Posterior cingulate gyrus (tissue), 11 donors: ENCODE measurements at regions of chr20 and their contacts with region 1.

Region 1: GRCh38 chr20:20052074-20052970 is at the starts of genes CFAP61 and CRNKL1:
- DNase-seq: peak; percentile 94 to 99 (median 96)

Region 2: DNA sequence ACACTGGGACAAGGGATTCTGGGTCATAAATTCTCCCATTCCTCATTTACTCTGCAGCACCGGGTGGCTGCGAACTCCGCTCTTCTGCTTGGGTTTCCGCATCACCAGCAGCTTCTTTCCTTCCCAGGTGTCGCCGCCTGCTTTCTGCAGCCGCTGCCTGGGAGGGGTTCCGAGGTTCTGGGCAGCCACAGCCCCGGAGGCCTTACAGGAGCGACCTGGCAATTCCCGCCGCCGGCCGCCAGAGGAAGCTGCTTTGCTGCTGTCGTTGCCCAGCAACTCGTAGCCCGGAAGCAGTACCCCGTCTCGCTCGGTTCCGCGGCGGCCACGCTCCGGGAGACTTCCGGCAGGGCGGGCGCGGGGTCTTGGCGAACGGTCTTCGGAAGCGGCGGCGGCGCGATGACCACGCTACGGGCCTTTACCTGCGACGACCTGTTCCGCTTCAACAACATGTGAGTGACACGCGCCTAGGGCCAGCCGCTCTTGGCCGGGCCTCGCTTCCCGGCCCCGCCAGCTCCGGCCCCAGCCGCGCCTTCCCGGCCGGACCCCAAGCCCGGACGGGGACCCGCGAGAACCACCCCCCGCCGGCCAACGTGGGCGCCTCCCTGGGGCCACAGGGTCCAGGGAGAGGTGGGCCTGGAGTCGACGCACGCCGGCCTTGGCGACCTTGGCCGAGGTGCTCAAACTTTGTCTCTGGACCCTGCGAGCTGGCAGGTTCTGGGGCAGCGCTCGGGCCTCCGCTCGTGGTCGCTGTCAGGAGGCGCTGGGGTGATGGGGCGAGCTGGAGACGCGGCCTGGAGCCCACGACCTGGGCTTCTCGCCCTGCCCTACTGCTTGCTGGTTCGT is 35.1 kb before region 1 on chr20 and contains the start of gene NAA20:
- intact Hi-C with region 1: loop called (anchors 5 kb)
- DNase-seq: peak; percentile 92 to 99 (median 96)

Region 3: DNA sequence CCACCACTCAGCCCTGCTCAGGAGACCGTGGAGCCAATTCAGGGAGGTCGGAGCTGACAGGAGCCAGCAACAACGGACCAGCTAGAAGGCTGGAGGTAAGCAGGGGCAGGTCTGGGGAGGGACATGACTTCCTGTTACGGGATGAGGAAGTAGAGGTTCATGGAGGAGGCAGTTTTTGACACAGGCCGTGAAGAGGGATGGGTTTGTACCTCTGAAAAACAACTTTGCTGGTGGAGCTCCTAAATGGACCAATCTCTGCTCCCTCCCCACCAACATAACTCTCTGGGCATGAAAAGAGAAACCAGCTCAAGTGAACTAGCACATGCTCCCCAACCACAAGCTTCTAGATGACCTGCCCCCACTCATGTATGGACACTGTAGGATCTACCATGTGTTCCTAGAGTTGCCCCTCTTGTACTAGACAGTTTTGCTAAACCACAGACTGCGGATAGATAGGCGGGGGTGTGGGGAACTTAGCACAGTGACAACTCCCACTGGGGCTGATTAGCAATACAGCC is 628.7 kb after region 1 on chr20:
- intact Hi-C with region 1: no loop called
- DNase-seq: peak in 1 of 10 donors; percentile 72